Heart left ventricle (tissue), 16 donors: ENCODE measurements at regions of chr11 and their contacts with region 1.

Region 1: DNA sequence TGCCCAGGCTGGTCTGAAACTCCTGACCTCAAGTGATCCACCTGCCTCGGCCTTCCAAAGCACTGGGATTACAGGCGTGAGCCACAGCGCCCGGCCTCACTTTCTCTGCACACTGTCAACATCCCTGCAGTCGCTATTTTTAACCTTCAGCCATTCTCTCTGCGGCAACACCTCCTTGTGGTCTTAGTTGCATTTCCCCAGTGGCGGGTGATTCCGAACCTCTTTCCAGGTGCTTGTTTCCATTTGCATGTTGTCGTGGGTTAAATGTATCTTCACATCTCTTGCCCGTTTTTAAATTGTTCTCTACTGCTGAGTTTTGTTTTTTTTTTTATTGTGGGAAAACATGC is 2.2 kb upstream of the SCT start:
- DNase-seq: peak in 2 of 5 donors; percentile 19 to 27
- ATAC-seq: peak; percentile 67 to 77 (median 71)
- H3K4me3 ChIP-seq: no peak overlapping the region
- H3K27ac ChIP-seq: peak overlapping the region in 3 of 12 donors; percentile 44 to 57 (median 56)
- H3K4me1 ChIP-seq: peaks cover 0 to 16% (median 0%) of the 10 kb centered on the region in 12 donors
- H3K27me3 ChIP-seq: peaks cover 6 to 24% (median 13%) of the 10 kb centered on the region in 9 donors
- CTCF ChIP-seq: peak in 6 of 12 donors; percentile 18 to 47 (median 28)
- POLR2A ChIP-seq: no peak

Region 2: DNA sequence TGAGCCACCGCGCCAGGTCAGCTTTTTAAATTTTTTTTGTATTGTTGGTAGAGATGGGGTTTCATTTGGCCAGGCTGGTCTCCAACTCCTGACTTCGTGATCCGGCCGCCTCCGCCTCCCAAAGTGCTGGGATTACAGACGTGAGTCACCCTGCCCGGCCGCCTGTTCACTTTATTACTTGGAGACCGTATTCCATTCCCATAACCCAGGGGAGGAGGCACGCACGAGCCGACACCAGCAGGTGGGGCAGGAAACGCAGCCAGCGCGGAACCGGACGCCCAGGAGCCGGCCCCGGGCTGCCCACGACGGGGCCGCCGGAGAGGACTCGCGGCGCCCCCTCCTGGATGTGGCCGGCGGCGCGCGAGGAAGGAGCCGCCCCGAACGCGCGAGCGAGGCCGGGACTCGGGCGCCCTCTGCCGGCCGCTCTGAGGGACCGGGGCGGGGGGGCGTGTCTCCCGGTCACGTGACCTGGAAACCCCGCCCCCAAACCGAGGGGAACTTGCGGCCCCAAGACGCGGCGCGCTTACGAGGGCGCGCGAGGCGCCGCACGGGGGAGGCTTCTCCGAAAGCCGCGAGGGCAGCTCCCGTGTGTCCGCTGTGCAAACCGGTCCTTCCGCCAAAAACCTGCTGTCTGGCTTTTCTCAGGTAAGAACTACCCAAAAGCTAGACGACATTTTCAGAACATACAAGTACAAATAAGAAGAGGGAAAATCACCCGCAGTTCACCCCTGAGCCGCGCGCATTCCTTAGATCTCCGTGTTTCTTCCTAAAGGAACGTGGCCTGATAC is 110.6 kb before region 1 on chr11:
- intact Hi-C with region 1: no loop called
- DNase-seq: peak; percentile 86 to 95 (median 92)
- ATAC-seq: peak; percentile 85 to 98 (median 98)
- H3K4me3 ChIP-seq: peak overlapping the region in 10 of 12 donors; percentile 2 to 49 (median 32)
- H3K27ac ChIP-seq: peak overlapping the region in 11 of 12 donors; percentile 34 to 83 (median 73)
- H3K4me1 ChIP-seq: peaks cover 0 to 10% (median 4%) of the 10 kb centered on the region in 12 donors
- H3K27me3 ChIP-seq: no peaks in the 10 kb centered on the region
- CTCF ChIP-seq: peak in 11 of 12 donors; percentile 96 to 100 (median 100)
- POLR2A ChIP-seq: peak in 1 of 2 donors; percentile 61

Region 3: DNA sequence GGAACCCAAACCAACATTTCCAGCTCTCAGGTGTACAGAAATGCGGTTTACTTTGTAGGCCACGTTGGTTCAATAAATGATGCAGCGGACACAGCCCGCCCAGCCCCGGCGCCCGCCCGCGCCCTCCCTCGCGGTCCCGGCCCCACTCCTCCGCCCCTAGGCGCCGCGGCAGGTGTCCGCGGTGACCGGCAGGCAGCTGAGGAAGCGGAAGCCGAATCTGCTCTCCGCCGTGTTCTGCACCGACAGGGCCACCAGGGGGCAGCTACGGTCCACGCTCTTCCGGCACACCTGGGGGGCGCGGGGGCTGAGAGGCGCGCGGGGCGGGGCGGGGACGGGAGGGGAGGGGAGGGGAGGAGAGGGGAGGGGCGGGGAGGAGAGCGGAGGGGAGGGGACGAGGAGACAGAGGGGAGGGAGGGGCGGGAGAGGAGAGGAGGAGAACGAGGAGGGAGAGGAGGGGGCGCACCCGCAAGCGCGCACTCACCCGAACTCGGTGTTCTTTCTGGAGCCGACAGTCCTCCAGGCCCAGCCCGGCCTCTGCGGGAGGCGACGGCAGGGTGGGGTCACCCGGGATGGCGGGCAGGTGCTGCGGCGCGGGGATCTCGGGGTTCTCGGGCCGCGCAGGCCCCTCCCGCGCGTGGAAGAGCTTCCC is 74.3 kb before region 1 on chr11:
- intact Hi-C with region 1: loop called in 2 of 10 experiments (anchors 2 to 5 kb)
- DNase-seq: peak in 3 of 5 donors; percentile 49 to 59 (median 55)
- ATAC-seq: peak in 3 of 4 donors; percentile 29 to 69 (median 56)
- H3K4me3 ChIP-seq: peak overlapping the region in 9 of 12 donors; percentile 10 to 50 (median 30)
- H3K27ac ChIP-seq: no peak overlapping the region
- H3K4me1 ChIP-seq: peaks cover 0 to 24% (median 13%) of the 10 kb centered on the region in 12 donors
- H3K27me3 ChIP-seq: peaks cover 27 to 88% (median 58%) of the 10 kb centered on the region in 9 donors
- CTCF ChIP-seq: peak; percentile 38 to 66 (median 54)
- POLR2A ChIP-seq: no peak

Region 4: GRCh38 chr11:727859-728748 is 98.9 kb after region 1 on chr11:
- intact Hi-C with region 1: no loop called
- DNase-seq: peak; percentile 68 to 88 (median 85)
- ATAC-seq: peak; percentile 69 to 92 (median 86)
- H3K4me3 ChIP-seq: no peak overlapping the region
- H3K27ac ChIP-seq: peak overlapping the region in 1 of 12 donors; percentile 1
- H3K4me1 ChIP-seq: peaks cover 0 to 30% (median 22%) of the 10 kb centered on the region in 12 donors
- H3K27me3 ChIP-seq: peaks cover 18 to 60% (median 29%) of the 10 kb centered on the region in 9 donors
- CTCF ChIP-seq: peak; percentile 90 to 99 (median 94)
- POLR2A ChIP-seq: no peak